Naive thymus-derived CD8-positive, alpha-beta T cell (primary cell): ENCODE measurements at regions of chr4 and their contacts with region 1.

Region 1: DNA sequence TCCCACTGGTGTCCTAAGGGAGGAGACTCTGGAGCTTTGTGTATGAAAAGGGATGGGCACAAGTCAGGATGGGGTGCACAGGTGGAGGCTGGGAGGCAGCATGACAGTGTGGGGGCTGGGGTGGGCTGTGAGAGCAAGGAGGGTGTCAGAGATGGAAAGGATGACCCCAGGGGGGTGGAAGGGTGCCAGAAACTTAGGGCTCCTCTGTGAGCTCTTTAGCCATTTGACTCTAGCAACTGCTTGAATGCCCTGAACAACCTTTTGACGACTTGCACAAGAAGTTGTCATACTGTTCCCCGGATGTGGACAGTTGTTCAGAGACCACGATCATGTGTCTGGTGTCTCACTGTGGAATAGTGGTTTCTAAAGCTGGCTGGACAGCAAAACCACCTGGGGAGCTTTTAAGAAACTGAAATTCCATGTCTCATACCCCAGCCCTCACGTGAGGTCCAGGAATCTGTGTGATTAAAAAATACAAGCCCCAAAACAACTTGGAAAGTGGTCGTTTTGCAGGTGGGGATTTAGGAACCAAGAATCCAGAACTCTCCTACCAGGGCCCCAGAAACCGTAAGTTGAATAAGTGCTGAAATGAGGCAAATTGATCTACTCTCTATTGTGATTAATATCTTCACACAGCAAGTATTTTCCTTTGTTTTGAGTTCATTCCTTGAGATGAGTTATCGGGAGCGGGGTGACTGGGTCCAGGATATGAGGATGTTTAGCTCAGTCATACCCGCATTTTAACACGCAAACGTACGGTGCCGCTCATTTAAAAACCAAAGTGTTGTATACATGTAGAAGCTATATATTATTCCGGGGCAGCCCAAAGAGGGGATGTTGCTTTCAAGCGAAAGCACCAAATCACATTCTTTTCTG is 3.4 kb downstream of the RHOH start:
- DNase-seq: peak in 8 of 10 donors; percentile 45 to 78 (median 68)
- ATAC-seq: peak; percentile 13 to 18
- H3K4me3 Mint-ChIP-seq: peak overlapping the region; percentile 94 to 100 (median 98)
- H3K27ac Mint-ChIP-seq: peak overlapping the region; percentile 94 to 100 (median 99)
- H3K4me1 Mint-ChIP-seq: peaks cover 34 to 71% (median 56%) of the 10 kb centered on the region in 4 donors
- H3K27me3 Mint-ChIP-seq: no peaks in the 10 kb centered on the region

Region 2: GRCh38 chr4:40056716-40057585 is 143.3 kb before region 1 on chr4 and contains the start of gene N4BP2:
- POLR2A ChIA-PET with region 1: interaction called, 18 read pairs
- DNase-seq: peak; percentile 51 to 85 (median 72)
- ATAC-seq: peak; percentile 65 to 67
- H3K4me3 Mint-ChIP-seq: peak within 1 kb of the TSS; percentile 92 to 100 (median 95)
- H3K27ac Mint-ChIP-seq: peak within 1 kb of the TSS; percentile 80 to 99 (median 97)
- H3K4me1 Mint-ChIP-seq: peaks cover 17 to 36% (median 33%) of the 10 kb centered on the region in 4 donors
- H3K27me3 Mint-ChIP-seq: no peaks in the 10 kb centered on the region
- polyA plus RNA-seq, gene N4BP2: 10.7 to 14.3 (median 13.5) TPM

Region 3: GRCh38 chr4:40185830-40186664 is 14.2 kb before region 1 on chr4:
- POLR2A ChIA-PET with region 1: interaction called, 37 read pairs
- DNase-seq: no peak
- ATAC-seq: no peak
- H3K4me3 Mint-ChIP-seq: peak overlapping the region in 1 of 10 donors; percentile 64
- H3K27ac Mint-ChIP-seq: peak overlapping the region in 4 of 10 donors; percentile 17 to 84 (median 72)
- H3K4me1 Mint-ChIP-seq: peaks cover 23 to 68% (median 51%) of the 10 kb centered on the region in 4 donors
- H3K27me3 Mint-ChIP-seq: no peaks in the 10 kb centered on the region

Region 4: GRCh38 chr4:40228497-40229365 is 28.5 kb after region 1 on chr4:
- POLR2A ChIA-PET with region 1: interaction called, 376 read pairs
- DNase-seq: no peak
- ATAC-seq: no peak
- H3K4me3 Mint-ChIP-seq: peak overlapping the region; percentile 62 to 91 (median 82)
- H3K27ac Mint-ChIP-seq: peak overlapping the region; percentile 88 to 99 (median 97)
- H3K4me1 Mint-ChIP-seq: peaks cover 47 to 96% (median 90%) of the 10 kb centered on the region in 4 donors
- H3K27me3 Mint-ChIP-seq: no peaks in the 10 kb centered on the region

Region 5: GRCh38 chr4:40247350-40247749 is 47.1 kb after region 1 on chr4:
- POLR2A ChIA-PET with region 1: interaction called, 79 read pairs
- DNase-seq: peak in 9 of 10 donors; percentile 52 to 86 (median 70)
- ATAC-seq: peak; percentile 69 to 86
- H3K4me3 Mint-ChIP-seq: peak overlapping the region in 9 of 10 donors; percentile 49 to 84 (median 76)
- H3K27ac Mint-ChIP-seq: peak overlapping the region; percentile 94 to 98 (median 96)
- H3K4me1 Mint-ChIP-seq: peaks cover 53 to 90% (median 82%) of the 10 kb centered on the region in 4 donors
- H3K27me3 Mint-ChIP-seq: no peaks in the 10 kb centered on the region

Region 6: GRCh38 chr4:40289366-40290188 is 89.3 kb after region 1 on chr4:
- POLR2A ChIA-PET with region 1: interaction called, 12 read pairs
- DNase-seq: peak in 5 of 10 donors; percentile 24 to 60 (median 58)
- ATAC-seq: peak; percentile 85 to 95
- H3K4me3 Mint-ChIP-seq: peak overlapping the region; percentile 26 to 90 (median 69)
- H3K27ac Mint-ChIP-seq: peak overlapping the region; percentile 82 to 97 (median 94)
- H3K4me1 Mint-ChIP-seq: peaks cover 36 to 85% (median 76%) of the 10 kb centered on the region in 4 donors
- H3K27me3 Mint-ChIP-seq: no peaks in the 10 kb centered on the region